ENCODE measurements at regions of chr12 and their contacts with region 1.

Region 1: DNA sequence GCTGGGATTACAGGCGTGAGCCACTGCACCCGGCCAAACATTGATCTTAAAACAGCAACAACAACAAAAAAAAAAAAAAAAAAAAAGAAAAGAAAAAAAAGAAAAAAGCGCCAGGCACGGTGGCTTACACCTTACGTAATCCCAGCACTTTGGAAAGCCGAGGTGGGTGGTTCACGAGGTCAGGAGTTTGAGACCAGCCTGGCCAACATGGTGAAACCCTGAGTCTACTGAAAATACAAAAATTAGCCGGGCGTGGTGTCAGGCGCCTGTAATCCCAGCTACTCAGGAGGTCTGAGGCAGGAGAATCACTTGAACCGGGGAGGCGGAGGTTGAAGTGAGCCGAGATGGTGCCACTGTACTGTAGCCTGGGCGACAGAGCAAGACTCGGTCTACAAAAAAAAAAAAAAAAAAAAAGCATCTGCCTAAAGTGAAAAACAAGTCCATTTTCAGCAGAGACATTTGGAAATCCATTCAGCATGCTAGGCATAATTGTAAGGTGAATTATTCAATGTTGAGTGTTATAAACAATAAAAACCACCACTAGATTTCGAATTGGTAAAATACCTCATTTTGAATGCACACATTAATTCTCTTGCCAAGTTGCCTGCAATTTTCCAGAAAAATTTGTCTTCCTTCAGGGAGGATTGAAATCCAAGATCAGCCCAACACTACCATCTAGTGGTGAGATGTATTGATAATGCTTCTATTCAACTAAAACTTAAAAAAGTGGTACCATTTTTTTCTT is 8.0 kb upstream of the CERS5 start:
- ATAC-seq: peak in 5 of 8 experiments; percentile 29 to 79 (median 63)
- H3K4me3 ChIP-seq: no peak overlapping the region
- H3K27ac ChIP-seq: no peak overlapping the region
- H3K4me1 ChIP-seq: no peaks in the 10 kb centered on the region

Region 2: GRCh38 chr12:49974231-49974675 is 200.9 kb before region 1 on chr12:
- in situ Hi-C with region 1: loop called in 2 of 9 experiments (anchors 10 kb)
- ATAC-seq: peak; percentile 43 to 88 (median 82)
- H3K4me3 ChIP-seq: no peak overlapping the region
- H3K27ac ChIP-seq: no peak overlapping the region
- H3K4me1 ChIP-seq: peaks cover 23 to 24% of the 10 kb centered on the region in 2 donors

Region 3: GRCh38 chr12:50074936-50075807 is 100.0 kb before region 1 on chr12:
- in situ Hi-C with region 1: loop called in 2 of 9 experiments (anchors 10 kb)
- ATAC-seq: peak; percentile 82 to 94 (median 94)
- H3K4me3 ChIP-seq: no peak overlapping the region
- H3K27ac ChIP-seq: no peak overlapping the region
- H3K4me1 ChIP-seq: peaks cover 2 to 3% of the 10 kb centered on the region in 2 donors

Region 4: DNA sequence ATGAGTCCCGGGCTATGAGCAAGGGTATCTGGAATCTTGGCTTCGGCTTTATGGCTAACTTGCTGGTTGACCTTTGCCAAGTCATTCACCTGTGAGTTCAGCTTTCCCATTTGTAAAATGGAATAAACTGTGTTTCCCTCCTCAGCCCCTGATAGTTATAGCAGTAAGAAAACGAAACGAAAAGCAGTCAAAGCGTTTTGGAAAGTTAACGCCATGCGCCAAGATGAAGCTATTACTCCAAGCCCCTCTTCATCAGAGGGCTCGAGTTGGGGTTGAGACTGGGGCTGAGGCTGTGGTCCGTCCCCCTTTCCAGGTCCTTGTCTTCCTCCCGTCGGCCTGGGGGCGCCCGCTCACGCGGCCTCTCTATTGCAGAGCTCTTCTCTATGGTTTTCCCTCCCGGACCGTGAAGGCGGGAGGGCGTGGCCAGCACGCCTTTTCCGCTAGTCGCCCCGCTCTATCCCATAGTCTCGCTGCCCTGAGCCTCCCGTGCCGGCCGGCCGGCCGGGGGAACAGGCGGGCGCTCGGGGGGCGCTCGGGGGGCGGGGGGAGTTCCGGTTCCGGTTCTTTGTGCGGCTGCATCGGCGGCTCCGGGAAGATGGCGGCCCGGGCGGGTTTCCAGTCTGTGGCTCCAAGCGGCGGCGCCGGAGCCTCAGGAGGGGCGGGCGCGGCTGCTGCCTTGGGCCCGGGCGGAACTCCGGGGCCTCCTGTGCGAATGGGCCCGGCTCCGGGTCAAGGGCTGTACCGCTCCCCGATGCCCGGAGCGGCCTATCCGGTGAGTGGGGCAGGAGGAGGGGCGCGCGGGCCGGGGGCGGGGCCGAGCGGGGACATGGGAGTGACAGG is 90.1 kb before region 1 on chr12 and contains the start of gene SMARCD1:
- in situ Hi-C with region 1: loop called in 1 of 9 experiments (anchors 10 kb)
- ATAC-seq: peak; percentile 82 to 98 (median 96)
- H3K4me3 ChIP-seq: peak within 1 kb of the TSS; percentile 76 to 97 (median 85)
- H3K27ac ChIP-seq: peak within 1 kb of the TSS; percentile 97
- H3K4me1 ChIP-seq: peaks cover 8 to 24% of the 10 kb centered on the region in 2 donors
- total RNA-seq, gene SMARCD1: 18.1 to 117 (median 65.4) TPM

Region 5: DNA sequence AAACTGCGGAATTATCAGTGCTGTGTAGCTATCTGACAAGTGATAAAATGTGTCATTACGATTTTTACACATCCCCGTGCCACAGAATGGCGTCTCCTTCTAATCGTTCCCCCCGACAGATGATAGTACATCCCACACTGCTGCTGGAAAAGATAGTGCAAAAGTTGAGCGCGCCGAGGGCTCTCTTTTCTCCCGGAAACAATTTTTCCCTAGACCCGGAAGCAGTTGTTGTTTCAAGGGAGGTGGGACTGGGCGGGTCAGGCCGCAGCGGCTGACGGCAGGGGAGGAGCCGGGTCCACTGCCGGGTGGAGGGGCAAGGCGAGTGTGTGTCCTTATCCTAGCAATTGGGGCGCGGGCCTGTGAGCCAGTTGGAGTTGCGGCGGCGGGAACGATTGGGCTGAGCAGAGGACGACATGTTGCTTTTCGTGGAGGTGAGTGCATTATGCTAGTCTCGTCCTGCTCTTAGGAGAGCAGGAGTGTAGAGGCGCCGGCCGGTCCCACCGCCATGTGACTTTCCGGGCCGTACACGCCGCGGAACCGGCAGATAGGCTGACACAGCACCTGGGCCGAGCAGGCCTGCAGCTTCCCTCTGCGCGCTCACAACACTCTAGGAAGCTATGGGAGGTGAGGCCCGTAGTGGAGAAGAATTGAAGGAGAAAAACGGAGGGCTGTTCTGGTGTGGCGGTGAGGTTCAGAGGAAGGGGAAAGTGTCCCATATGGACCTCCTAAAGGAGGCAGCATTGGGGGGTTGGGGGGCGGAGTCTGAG is 225.6 kb after region 1 on chr12 and contains the start of gene LARP4:
- in situ Hi-C with region 1: no loop called
- ATAC-seq: peak; percentile 94 to 98 (median 97)
- H3K4me3 ChIP-seq: peak within 1 kb of the TSS; percentile 48 to 72 (median 58)
- H3K27ac ChIP-seq: peak within 1 kb of the TSS; percentile 67 to 81
- H3K4me1 ChIP-seq: peaks cover 0 to 12% of the 10 kb centered on the region in 2 donors
- total RNA-seq, gene LARP4: 17.4 to 73.1 (median 29.8) TPM